Posterior cingulate gyrus (tissue), 11 donors: ENCODE measurements at regions of chr10 and their contacts with region 1.

Region 1: GRCh38 chr10:15585303-15585715 is 134.4 kb downstream of the ITGA8 start:
- DNase-seq: peak in 7 of 10 donors; percentile 32 to 92 (median 50)

Region 2: GRCh38 chr10:15505329-15505728 is 80.0 kb before region 1 on chr10:
- intact Hi-C with region 1: no loop called
- DNase-seq: no peak

Region 3: DNA sequence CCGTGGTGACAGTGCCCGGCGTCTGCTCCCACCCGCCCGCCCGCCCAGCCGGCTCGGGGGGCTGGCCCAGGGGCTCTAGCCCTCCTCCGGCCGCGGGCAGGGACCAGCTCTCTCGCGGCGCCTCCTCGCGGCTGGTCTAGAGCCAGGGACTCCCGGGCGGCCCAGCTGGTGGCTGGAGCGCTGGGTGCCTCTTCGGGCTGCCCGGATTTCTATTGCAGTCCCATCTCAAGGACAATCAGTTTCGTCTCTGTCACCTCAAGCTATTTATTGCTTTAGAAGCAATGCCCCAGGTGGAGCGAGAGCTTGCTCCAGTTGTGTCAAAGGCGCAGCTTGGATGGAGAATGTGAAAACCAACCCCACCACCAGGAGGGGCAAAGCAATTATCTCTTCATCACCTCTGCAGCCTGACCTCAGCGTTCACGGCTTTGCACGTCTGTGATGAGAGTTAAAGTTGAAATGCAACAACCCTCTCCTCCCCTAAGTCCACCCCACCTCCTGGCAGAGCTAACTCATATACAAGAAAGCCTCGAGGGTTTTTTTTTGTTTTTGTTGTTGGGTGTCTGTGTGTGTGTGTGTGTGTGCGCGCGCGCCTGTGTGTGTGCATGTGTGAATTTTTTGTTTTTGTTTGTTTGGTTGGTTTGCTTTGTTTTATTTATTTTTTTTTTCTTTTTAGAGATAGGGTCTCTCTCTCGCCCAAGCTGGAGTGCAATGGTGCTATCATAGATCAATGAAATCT is 134.8 kb after region 1 on chr10 and contains the start of gene ITGA8:
- intact Hi-C with region 1: loop called (anchors 10 kb)
- DNase-seq: peak in 2 of 10 donors; percentile 22 to 83

Region 4: GRCh38 chr10:15730341-15730740 is 145.0 kb after region 1 on chr10:
- intact Hi-C with region 1: no loop called
- DNase-seq: no peak